Spleen (tissue), 13 donors: ENCODE measurements at regions of chr1 and their contacts with region 1.

Region 1: GRCh38 chr1:158998781-158999161 is 10.9 kb upstream of the IFI16 start:
- DNase-seq: peak; percentile 76
- H3K4me3 ChIP-seq: peak overlapping the region in 7 of 8 donors; percentile 13 to 63 (median 29)
- H3K27ac ChIP-seq: peak overlapping the region; percentile 16 to 88 (median 88)
- H3K4me1 ChIP-seq: peaks cover 4 to 48% (median 19%) of the 10 kb centered on the region in 6 donors
- H3K27me3 ChIP-seq: no peaks in the 10 kb centered on the region
- CTCF ChIP-seq: peak; percentile 74 to 96 (median 90)
- POLR2A ChIP-seq: no peak

Region 2: GRCh38 chr1:158203693-158204457 is 794.9 kb before region 1 on chr1:
- intact Hi-C with region 1: loop called (anchors 5 kb)
- DNase-seq: no peak
- H3K4me3 ChIP-seq: peak overlapping the region in 1 of 8 donors; percentile 21
- H3K27ac ChIP-seq: peak overlapping the region in 1 of 8 donors; percentile 40
- H3K4me1 ChIP-seq: peaks cover 0 to 15% (median 11%) of the 10 kb centered on the region in 6 donors
- H3K27me3 ChIP-seq: peaks cover 0 to 7% (median 0%) of the 10 kb centered on the region in 7 donors
- CTCF ChIP-seq: peak; percentile 49 to 85 (median 76)
- POLR2A ChIP-seq: no peak

Region 3: GRCh38 chr1:158506369-158506987 is 492.3 kb before region 1 on chr1:
- intact Hi-C with region 1: loop called (anchors 5 kb)
- DNase-seq: no peak
- H3K4me3 ChIP-seq: no peak overlapping the region
- H3K27ac ChIP-seq: no peak overlapping the region
- H3K4me1 ChIP-seq: no peaks in the 10 kb centered on the region
- H3K27me3 ChIP-seq: peaks cover 0 to 5% (median 0%) of the 10 kb centered on the region in 7 donors
- CTCF ChIP-seq: peak in 10 of 11 experiments; percentile 41 to 71 (median 54)
- POLR2A ChIP-seq: no peak

Region 4: GRCh38 chr1:158793604-158794003 is 205.2 kb before region 1 on chr1:
- intact Hi-C with region 1: loop called (anchors 10 kb)
- DNase-seq: no peak
- H3K4me3 ChIP-seq: no peak overlapping the region
- H3K27ac ChIP-seq: peak overlapping the region in 1 of 8 donors; percentile 50
- H3K4me1 ChIP-seq: peaks cover 0 to 24% (median 0%) of the 10 kb centered on the region in 6 donors
- H3K27me3 ChIP-seq: no peaks in the 10 kb centered on the region
- CTCF ChIP-seq: peak in 8 of 11 experiments; percentile 17 to 56 (median 42)
- POLR2A ChIP-seq: no peak

Region 5: GRCh38 chr1:159089184-159089791 is 90.5 kb after region 1 on chr1:
- intact Hi-C with region 1: no loop called
- DNase-seq: no peak
- H3K4me3 ChIP-seq: no peak overlapping the region
- H3K27ac ChIP-seq: peak overlapping the region in 6 of 8 donors; percentile 35 to 90 (median 58)
- H3K4me1 ChIP-seq: peaks cover 0 to 66% (median 24%) of the 10 kb centered on the region in 6 donors
- H3K27me3 ChIP-seq: no peaks in the 10 kb centered on the region
- CTCF ChIP-seq: peak; percentile 50 to 81 (median 72)
- POLR2A ChIP-seq: no peak